ENCODE measurements at regions of chr16 and their contacts with region 1.

Region 1: GRCh38 chr16:75305364-75306098 is 54.1 kb upstream of the BCAR1 start:
- DNase-seq: peak; percentile 99
- H3K4me3 ChIP-seq: peak overlapping the region; percentile 22; the same call in 1 of the 2 replicates
- H3K27ac ChIP-seq: peak overlapping the region; percentile 99
- H3K27me3 ChIP-seq: no peaks in the 10 kb centered on the region
- CTCF ChIP-seq: no peak

Region 2: DNA sequence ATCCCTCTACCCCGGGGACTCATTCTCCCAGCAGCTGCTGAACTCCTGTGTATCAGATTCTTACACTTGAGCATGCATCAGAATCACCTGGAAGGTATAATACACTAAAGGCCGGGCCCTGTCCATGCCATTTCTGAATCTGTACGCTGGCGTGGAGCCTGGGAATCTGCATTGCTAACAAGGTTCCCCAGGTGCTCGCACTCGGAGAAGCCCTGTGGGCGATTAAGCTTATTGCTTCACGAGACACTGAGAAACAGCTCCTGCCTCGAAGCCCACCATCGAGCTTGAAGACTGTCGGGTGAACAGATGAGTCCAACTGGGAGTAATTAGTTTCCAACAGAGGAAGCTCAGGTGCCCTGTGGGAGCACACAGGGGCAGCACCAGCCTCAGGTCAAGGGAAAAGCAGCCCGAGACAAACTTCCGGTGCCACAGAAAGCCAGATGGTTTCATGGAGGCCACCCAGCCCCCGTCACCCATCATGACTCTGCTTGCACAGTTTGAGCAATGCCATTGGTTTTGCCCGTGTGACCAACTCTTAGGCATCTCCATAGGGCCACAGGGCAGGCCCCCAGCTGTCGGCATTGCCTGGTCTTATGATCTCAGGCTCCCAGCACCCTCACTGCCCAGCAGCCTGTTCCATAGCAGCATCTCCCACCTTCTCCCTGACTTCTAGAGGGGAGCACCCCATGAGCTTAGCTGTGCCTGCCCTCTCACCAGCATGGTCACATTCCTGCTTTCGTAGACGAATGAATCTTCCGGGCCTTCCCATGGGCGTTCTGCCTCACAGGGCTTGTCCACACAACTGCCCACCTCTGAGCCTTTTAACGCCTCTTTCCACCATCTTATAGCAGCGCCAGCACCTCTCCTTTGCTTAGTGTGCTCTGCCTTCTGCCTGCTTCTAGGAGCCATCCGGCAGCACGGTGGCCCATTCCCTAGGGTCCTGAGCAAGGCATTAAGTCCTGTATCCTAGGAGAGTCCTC is 109.4 kb before region 1 on chr16:
- CTCF ChIA-PET with region 1: no interaction called
- POLR2A ChIA-PET with region 1: no interaction called
- DNase-seq: no peak
- H3K4me3 ChIP-seq: no peak overlapping the region
- H3K27ac ChIP-seq: no peak overlapping the region
- H3K27me3 ChIP-seq: peaks cover 8% of the 10 kb centered on the region
- CTCF ChIP-seq: no peak

Region 3: DNA sequence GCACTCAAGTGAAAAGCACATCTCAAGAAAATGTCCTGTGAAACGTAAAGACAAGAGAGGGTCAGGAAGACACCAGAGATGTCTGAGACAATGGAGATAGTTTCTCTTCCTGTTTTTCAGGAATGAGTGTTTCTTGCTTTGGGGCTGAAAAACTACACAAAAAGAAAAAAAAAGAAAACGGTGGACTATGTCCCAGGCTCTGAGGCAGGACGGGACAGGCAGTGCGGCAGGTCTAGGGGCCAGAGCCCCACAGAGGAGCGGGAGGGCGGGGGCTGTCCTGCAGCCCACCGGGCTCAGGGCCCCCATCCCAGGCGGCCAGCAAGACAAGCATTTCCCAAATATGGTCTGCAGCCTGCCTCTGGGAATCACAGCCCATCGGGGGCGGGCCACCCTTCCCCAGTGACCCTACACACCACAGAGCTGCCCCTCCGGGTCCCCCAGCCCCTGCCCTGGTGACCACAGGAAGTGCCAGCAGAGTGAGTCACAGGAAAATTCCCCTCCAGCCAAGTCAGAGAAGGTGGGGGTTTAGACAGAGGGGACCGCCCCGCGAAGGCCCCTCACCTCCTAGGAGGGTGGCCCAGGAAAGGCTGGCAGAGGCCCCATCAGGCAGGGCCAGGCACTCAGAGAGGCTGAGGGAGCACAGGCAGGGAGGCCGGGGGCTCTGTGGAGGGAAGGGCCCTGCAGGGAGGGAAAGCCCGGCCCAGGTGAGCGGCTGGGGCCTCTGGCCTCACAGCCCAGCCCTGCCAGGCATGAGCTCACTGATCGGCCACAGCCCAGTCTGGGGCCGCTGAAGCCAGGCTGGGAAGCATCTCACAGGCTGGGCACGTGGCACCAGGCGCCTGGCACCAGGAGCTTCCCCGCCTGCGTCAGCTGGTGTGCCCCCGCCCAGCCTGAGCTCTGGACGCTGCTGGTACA is 60.4 kb before region 1 on chr16:
- CTCF ChIA-PET with region 1: no interaction called
- POLR2A ChIA-PET with region 1: interaction called, 10 read pairs
- DNase-seq: peak; percentile 96
- H3K4me3 ChIP-seq: peak overlapping the region; percentile 37; the same call in 1 of the 2 replicates
- H3K27ac ChIP-seq: peak overlapping the region; percentile 100
- H3K27me3 ChIP-seq: no peaks in the 10 kb centered on the region
- CTCF ChIP-seq: no peak

Region 4: DNA sequence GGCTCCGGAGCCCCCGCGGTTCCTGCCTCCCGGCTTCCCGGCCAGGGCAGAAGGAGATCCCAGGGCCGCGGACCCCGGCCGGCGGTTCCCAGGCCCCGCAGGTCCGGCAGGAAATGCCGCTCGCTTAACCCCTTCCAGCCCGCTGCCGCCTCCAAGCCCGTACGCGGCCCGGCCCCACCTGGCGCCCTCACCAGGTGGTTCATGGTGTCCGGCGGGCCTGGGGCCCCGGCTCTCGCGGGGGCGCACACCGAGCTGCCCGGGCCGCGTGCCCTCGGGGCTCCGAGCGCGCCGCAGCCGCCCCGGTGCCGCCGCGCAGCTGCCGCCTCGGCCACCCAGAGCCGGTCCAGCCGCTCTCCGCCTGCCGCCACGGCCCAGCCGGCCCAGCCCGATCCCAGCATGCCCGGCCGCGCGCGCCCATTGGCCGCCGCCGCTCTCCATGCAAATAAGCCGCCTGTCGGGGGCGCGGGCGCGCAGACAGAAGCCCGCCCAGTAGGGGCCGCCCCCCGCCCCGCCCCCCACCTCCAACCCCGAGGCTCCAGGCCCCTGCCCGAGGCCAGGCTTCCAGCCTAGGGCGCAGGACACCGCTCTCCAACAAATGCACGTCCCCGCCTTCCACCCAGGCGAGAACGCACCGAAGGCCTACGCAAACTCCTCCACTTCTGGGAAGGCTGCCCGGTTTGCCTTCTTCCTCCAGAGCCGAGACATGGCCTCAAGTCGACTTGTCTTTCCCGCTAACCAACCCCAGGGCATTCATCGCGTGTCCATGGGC is 54.1 kb before region 1 on chr16 and contains the start of gene BCAR1:
- CTCF ChIA-PET with region 1: no interaction called
- POLR2A ChIA-PET with region 1: interaction called, 10 read pairs
- DNase-seq: peak; percentile 73
- H3K4me3 ChIP-seq: peak within 1 kb of the TSS; percentile 84
- H3K27ac ChIP-seq: peak within 1 kb of the TSS; percentile 77
- H3K27me3 ChIP-seq: no peaks in the 10 kb centered on the region
- CTCF ChIP-seq: no peak
- polyA plus RNA-seq, gene BCAR1: 16.1 and 26.9 TPM in 2 replicates

Region 5: GRCh38 chr16:75319513-75320411 is 14.2 kb after region 1 on chr16:
- CTCF ChIA-PET with region 1: no interaction called
- POLR2A ChIA-PET with region 1: interaction called, 18 read pairs
- DNase-seq: peak; percentile 63
- H3K4me3 ChIP-seq: peak overlapping the region; percentile 47
- H3K27ac ChIP-seq: peak overlapping the region; percentile 99
- H3K27me3 ChIP-seq: no peaks in the 10 kb centered on the region
- CTCF ChIP-seq: no peak

Region 6: GRCh38 chr16:75443298-75443697 is 137.8 kb after region 1 on chr16:
- CTCF ChIA-PET with region 1: no interaction called
- POLR2A ChIA-PET with region 1: no interaction called
- DNase-seq: no peak
- H3K4me3 ChIP-seq: no peak overlapping the region
- H3K27ac ChIP-seq: no peak overlapping the region
- H3K27me3 ChIP-seq: no peaks in the 10 kb centered on the region
- CTCF ChIP-seq: no peak